Right cardiac atrium (tissue), 5 donors: ENCODE measurements at regions of chr21 and their contacts with region 1.

Region 1: GRCh38 chr21:44049182-44049978 is 37.3 kb downstream of the TRAPPC10 start:
- DNase-seq: no peak
- ATAC-seq: no peak
- H3K4me3 ChIP-seq: no peak overlapping the region
- H3K27ac ChIP-seq: no peak overlapping the region
- H3K4me1 ChIP-seq: peaks cover 9% of the 10 kb centered on the region
- H3K27me3 ChIP-seq: no peaks in the 10 kb centered on the region

Region 2: DNA sequence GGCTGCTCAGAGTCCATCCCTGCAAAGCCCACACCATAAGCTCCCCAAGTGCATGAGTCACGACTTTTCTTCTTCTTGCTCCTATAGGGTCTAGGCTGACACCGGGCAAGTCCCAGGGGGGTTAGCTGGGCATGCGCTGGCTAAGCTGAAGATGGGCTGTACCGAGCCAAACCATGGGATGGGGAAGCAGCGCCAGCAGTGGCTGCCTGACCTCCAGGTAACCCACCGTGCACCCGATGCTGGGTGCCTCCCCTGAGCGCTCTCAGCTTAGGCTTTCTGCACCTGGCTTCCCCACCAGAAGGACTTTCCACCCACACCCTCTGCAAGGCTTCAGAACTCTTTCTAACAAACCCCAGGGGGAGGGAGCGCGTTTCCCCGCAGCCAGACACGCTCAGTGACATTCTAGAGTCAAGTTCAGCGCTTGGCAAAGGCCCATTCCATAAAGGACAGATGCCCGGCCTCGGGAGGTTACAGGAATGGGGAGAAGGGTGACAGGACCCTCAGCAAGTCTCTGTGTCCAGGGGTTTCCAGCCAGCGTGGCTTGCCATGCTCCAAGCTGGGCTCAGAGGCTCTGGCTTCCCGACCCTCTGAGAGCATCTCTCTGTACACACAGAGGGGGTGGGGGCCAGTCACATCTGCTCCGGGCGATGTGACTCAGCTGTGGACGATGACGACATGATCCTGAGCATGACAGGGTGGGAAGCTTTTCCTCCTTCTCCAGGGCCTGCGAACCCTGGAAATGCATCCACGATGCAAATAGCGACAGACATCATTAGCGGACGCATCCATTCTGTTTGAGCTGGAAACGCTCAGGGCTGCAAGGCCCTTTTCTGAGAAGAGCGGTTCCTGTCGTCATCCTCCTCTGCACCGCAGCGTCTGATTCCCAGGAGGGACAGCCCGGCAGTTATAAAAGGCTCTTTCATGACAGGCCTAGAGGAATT is 730.3 kb before region 1 on chr21:
- intact Hi-C with region 1: no loop called
- DNase-seq: peak; percentile 51 to 57 (median 57)
- ATAC-seq: peak in 1 of 2 donors; percentile 62
- H3K4me3 ChIP-seq: no peak overlapping the region
- H3K27ac ChIP-seq: no peak overlapping the region
- H3K4me1 ChIP-seq: no peaks in the 10 kb centered on the region
- H3K27me3 ChIP-seq: no peaks in the 10 kb centered on the region

Region 3: DNA sequence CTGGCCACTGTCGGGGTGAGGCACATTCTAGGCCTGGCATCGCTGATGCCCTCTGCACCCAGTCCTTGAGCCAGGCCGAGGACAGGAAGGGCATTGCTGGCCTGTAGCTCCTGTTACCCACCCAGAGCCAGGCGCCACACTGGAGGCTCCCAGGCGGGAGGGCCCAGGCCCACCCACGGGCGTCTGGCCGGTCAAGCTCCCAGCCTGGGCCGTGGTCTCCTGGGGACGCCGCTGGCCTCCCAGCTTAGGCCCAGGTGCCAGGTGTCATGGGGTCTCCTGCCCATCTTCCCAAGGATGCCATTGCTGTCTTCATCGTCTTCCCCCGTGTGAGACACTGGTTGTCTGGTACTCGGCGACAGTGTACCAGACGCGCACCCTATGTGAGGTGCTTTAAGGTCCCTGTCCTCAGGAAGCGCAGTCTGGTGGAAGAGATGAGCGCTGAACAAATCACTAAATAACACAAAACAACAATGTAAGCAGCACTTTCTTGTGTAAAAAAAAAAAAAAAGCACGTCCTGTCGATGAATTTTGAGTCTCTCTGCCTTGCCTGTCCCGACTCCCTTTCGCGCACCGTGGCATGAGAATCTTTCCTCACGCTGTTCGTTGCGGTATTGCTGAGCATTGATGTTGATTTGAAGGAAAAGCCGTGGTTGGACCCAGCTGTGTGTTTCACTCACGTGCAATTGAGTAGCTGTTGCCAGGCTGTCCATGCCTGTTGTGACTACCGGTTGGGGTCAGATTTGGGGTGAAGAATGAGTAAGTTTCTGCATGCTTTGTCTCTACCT is 64.3 kb before region 1 on chr21:
- intact Hi-C with region 1: loop called in 1 of 4 experiments (anchors 10 kb)
- DNase-seq: no peak
- ATAC-seq: peak in 1 of 2 donors; percentile 6
- H3K4me3 ChIP-seq: no peak overlapping the region
- H3K27ac ChIP-seq: no peak overlapping the region
- H3K4me1 ChIP-seq: no peaks in the 10 kb centered on the region
- H3K27me3 ChIP-seq: no peaks in the 10 kb centered on the region